Head of caudate nucleus (tissue), 42 donors: ENCODE measurements at regions of chr9 and their contacts with region 1.

Region 1: GRCh38 chr9:71768388-71769174 is at the start of gene CEMIP2:
- DNase-seq: peak; percentile 54 to 97 (median 91)

Region 2: DNA sequence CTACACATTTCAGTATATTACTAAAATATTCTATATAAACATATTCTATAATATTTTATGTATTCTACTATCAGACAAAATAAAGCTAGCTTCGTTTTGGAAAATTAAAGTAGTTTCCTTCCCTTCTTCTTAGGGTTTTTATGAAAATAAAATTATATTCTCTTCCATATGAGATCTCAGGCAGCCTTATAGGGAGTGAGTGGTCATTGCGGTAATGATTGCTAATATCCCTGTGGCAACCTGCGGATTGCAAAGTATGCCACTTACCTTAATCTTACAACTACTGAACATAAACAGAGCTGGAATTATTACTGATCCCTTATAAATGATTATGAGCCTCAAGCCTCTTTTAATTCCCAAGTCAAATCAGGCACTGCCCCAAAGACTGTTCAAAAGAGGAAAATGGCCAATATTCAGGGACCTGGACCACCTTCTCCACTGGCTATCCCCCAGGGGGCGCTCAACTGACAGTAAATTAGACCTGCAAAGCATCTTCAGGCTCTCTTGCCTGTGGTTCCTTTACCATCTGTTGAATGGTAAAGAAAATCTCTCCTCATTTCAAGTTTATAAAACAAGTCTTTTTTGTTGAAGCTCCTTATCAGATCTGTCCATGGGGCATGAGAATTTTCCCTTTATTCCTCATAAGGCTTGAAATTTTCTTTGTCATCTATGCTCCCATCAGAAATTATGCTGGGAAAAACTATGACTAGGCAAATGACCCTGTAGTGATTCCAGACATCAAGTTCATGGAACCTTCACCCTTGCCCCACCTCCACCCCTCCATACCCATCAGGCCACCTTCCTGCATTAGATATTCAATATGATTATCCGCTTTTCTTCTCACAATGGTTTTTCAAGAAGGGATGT is 164.2 kb before region 1 on chr9:
- intact Hi-C with region 1: loop called (anchors 5 kb)
- DNase-seq: peak; percentile 47 to 91 (median 74)

Region 3: GRCh38 chr9:71683598-71684235 is 84.9 kb before region 1 on chr9:
- intact Hi-C with region 1: loop called (anchors 10 kb)
- DNase-seq: peak in 40 of 42 donors; percentile 11 to 81 (median 42)

Region 4: DNA sequence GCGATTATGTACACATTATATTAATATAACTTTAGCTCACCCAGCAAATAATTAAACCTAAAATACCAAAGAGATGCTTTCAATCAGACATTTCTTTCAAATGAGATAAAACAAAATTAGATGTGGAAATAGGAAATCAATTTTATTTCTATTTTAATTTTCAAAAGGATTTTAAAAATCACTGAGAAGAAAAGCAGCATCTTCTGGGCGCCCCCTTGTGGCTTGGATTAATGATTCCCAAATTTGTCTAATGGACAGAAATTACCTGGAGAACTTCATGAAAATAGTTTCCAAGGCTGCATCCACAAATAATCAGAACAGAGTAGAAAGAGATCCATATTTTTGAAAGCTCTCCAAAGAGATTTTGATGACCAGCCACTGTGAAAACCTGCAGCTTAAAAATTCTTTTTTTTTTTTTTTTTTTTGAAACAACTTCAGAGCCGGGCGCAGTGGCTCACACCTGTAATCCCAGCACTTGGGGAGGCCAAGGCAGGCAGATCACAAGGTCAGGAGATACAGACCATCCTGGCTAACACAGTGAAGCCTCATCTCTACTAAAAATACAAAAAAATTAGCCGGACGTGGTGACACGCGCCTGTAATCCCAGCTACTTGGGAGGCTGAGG is 50.6 kb after region 1 on chr9:
- intact Hi-C with region 1: no loop called
- DNase-seq: peak in 34 of 42 donors; percentile 25 to 87 (median 58)

Region 5: DNA sequence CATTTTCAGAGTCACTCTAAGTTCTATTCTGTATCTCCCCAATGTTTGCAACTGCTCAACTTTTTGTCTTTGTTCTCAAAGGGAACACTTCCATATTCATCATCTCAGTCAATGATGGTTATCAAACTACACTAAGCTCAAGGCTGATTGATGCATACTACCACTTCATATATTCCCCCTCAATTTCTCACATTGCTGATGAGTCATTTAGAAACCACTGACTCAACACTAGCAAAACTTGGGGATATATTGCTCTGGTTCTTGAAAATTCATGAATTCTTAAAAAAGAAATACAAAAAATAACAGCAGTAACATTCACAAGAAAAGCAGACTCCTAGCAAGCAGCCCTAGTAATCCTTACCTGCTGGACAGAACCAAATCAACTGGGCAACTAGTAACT is 90.2 kb after region 1 on chr9:
- intact Hi-C with region 1: no loop called
- DNase-seq: peak in 1 of 42 donors; percentile 4